ENCODE measurements at regions of chr13 and their contacts with region 1.

Region 1: DNA sequence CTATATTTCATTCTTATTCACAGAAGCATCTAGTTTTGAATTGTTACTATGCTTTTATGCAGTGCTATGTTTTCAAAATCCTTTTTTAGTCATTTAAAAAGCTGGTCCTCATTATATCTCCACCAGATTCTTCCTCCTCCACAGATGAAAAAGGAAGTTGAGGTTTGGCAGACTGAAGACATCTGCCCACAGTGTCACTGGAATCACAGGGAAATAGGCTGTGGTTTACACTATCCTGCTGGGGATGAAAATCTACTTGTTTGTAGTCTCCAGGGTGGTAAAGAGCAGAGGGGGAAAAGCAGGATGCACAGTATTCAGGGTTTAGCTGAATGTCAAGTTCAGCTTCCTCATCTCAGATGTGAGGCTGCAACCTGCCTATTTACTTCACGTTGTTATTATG is 351.2 kb downstream of the DNAJC15 start:
- DNase-seq: no peak
- ATAC-seq: no peak
- H3K4me3 ChIP-seq: no peak overlapping the region
- H3K4me3 Mint-ChIP-seq: no peak overlapping the region
- H3K27ac ChIP-seq: no peak overlapping the region
- H3K27ac Mint-ChIP-seq: no peak overlapping the region
- H3K4me1 ChIP-seq: peaks cover 0 to 2% of the 10 kb centered on the region in 2 experiments
- H3K4me1 Mint-ChIP-seq: peaks cover 8 to 18% (median 13%) of the 10 kb centered on the region in 3 donors
- H3K27me3 ChIP-seq: no peaks in the 10 kb centered on the region
- H3K27me3 Mint-ChIP-seq: peaks cover 19 to 21% of the 10 kb centered on the region in 2 donors

Region 2: DNA sequence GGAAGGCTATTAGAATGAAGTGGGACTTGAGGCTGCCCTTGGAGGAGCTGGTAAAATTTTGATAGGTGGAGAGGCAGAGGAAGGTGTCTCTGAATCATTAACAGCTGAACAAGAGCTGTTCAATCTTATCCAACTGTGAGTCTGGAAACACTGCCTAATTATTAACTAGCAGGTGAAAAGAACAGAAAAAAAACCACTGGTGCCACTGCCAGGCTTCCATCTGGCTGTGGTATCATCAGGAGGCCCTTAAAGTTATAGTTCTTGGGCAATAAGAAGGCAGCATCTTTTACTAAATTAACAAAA is 14.1 kb after region 1 on chr13:
- CTCF ChIA-PET with region 1: no interaction called
- POLR2A ChIA-PET with region 1: interaction called in 1 of 2 experiments, 16 read pairs
- DNase-seq: no peak
- ATAC-seq: no peak
- H3K4me3 ChIP-seq: no peak overlapping the region
- H3K4me3 Mint-ChIP-seq: no peak overlapping the region
- H3K27ac ChIP-seq: no peak overlapping the region
- H3K27ac Mint-ChIP-seq: no peak overlapping the region
- H3K4me1 ChIP-seq: no peaks in the 10 kb centered on the region
- H3K4me1 Mint-ChIP-seq: no peaks in the 10 kb centered on the region
- H3K27me3 ChIP-seq: peaks cover 0 to 2% of the 10 kb centered on the region in 2 experiments
- H3K27me3 Mint-ChIP-seq: peaks cover 6 to 11% of the 10 kb centered on the region in 2 donors